Naive thymus-derived CD4-positive, alpha-beta T cell (primary cell): ENCODE measurements at regions of chr5 and their contacts with region 1.

Region 1: GRCh38 chr5:115169487-115170133 is at the start of gene TRIM36:
- DNase-seq: peak; percentile 70 to 97 (median 81)
- ATAC-seq: peak; percentile 98
- H3K4me3 ChIP-seq: peak within 1 kb of the TSS; percentile 70
- H3K4me3 Mint-ChIP-seq: peak within 1 kb of the TSS; percentile 71 to 89 (median 84)
- H3K27ac ChIP-seq: no peak within 1 kb of the TSS
- H3K27ac Mint-ChIP-seq: peak within 1 kb of the TSS in 2 of 9 donors; percentile 53 to 81
- H3K4me1 ChIP-seq: peaks cover 9 to 11% of the 10 kb centered on the region in 2 donors
- H3K4me1 Mint-ChIP-seq: peaks cover 6 to 17% (median 12%) of the 10 kb centered on the region in 7 donors
- H3K27me3 ChIP-seq: peaks cover 17 to 38% of the 10 kb centered on the region in 2 donors
- H3K27me3 Mint-ChIP-seq: peaks cover 61 to 77% (median 68%) of the 10 kb centered on the region in 5 donors
- total RNA-seq, gene TRIM36: 0.12 to 2.6 (median 0.32) TPM in 4 of 5 experiments, not detected in the other

Region 2: GRCh38 chr5:113302120-113302519 is 1867.5 kb before region 1 on chr5:
- CTCF ChIA-PET with region 1: no interaction called
- POLR2A ChIA-PET with region 1: no interaction called
- intact Hi-C with region 1: no loop called
- DNase-seq: no peak
- ATAC-seq: no peak
- H3K4me3 ChIP-seq: no peak overlapping the region
- H3K4me3 Mint-ChIP-seq: no peak overlapping the region
- H3K27ac ChIP-seq: no peak overlapping the region
- H3K27ac Mint-ChIP-seq: no peak overlapping the region
- H3K4me1 ChIP-seq: no peaks in the 10 kb centered on the region
- H3K4me1 Mint-ChIP-seq: no peaks in the 10 kb centered on the region
- H3K27me3 ChIP-seq: no peaks in the 10 kb centered on the region
- H3K27me3 Mint-ChIP-seq: peaks cover 28 to 54% (median 28%) of the 10 kb centered on the region in 5 donors

Region 3: GRCh38 chr5:115079924-115080623 is 89.5 kb before region 1 on chr5:
- CTCF ChIA-PET with region 1: no interaction called
- POLR2A ChIA-PET with region 1: no interaction called
- intact Hi-C with region 1: no loop called
- DNase-seq: no peak
- ATAC-seq: no peak
- H3K4me3 ChIP-seq: no peak overlapping the region
- H3K4me3 Mint-ChIP-seq: no peak overlapping the region
- H3K27ac ChIP-seq: no peak overlapping the region
- H3K27ac Mint-ChIP-seq: no peak overlapping the region
- H3K4me1 ChIP-seq: no peaks in the 10 kb centered on the region
- H3K4me1 Mint-ChIP-seq: no peaks in the 10 kb centered on the region
- H3K27me3 ChIP-seq: peaks cover 0 to 5% of the 10 kb centered on the region in 2 donors
- H3K27me3 Mint-ChIP-seq: peaks cover 9 to 25% (median 14%) of the 10 kb centered on the region in 5 donors

Region 4: DNA sequence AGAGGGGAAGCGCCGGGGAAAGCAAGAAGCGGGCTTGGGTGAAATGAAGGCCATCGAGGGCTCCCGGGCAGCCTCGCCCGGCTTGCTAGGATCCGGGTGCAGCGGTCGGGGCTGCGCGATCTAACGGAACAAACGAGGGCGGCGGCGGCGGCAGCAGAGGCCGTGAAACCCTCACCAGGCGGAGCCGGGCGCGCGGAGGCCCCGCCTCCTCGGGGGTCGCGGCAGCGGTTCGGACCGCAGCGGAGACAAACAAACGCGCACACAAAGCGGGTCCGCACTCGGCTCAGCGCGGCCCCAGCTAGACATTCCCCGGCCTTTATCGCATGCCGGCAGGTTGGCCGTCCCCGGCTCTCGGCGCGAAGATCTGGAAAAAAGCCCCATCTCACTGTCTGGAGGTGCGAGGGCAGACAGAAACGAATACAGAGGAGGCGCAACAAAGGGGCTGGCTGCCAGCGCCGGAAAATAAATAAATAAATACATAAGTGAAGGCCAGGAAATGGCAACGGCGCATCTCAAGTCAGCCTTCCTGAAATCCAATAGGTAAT is 10.6 kb after region 1 on chr5:
- CTCF ChIA-PET with region 1: no interaction called
- POLR2A ChIA-PET with region 1: no interaction called
- intact Hi-C with region 1: loop called in 1 of 2 experiments (anchors 1 kb)
- DNase-seq: peak in 5 of 9 donors; percentile 4 to 44 (median 22)
- ATAC-seq: peak; percentile 68
- H3K4me3 ChIP-seq: peak overlapping the region; percentile 42
- H3K4me3 Mint-ChIP-seq: peak overlapping the region; percentile 72 to 93 (median 83)
- H3K27ac ChIP-seq: no peak overlapping the region
- H3K27ac Mint-ChIP-seq: no peak overlapping the region
- H3K4me1 ChIP-seq: peaks cover 10 to 16% of the 10 kb centered on the region in 2 donors
- H3K4me1 Mint-ChIP-seq: peaks cover 5 to 20% (median 6%) of the 10 kb centered on the region in 7 donors
- H3K27me3 ChIP-seq: peaks cover 17 to 21% of the 10 kb centered on the region in 2 donors
- H3K27me3 Mint-ChIP-seq: peaks cover 81 to 89% (median 86%) of the 10 kb centered on the region in 5 donors

Region 5: DNA sequence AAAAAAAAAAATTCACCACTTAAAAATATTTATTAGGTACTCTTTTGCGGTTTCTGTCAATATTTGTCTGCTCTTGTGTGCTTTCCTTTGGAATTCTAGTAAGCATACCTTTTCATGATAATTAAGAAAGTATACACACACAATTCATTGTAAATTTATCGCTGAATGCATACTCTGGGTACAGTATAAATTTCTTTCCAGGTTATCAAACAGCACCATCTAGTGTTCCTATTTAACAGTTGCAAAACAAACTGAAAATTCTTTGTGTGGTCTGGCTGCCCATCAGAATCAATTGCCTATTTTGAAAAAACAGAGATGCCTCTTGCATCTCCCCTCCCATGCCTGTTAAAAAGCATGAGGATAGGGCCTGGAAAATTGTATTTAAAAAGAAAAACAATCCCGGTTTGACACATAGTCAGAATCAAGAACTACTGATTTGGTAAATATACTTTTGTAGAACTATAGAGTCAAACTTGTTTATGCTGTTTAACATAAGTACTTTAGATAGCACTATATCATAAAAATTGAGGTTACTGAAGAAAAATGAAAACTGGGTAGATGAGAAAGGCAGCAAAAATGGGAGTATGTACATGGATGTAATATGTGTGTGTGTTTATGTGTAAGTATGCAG is 76.9 kb after region 1 on chr5:
- CTCF ChIA-PET with region 1: no interaction called
- POLR2A ChIA-PET with region 1: no interaction called
- intact Hi-C with region 1: loop called in 1 of 2 experiments (anchors 2 kb)
- DNase-seq: peak in 6 of 9 donors; percentile 8 to 36 (median 18)
- ATAC-seq: peak; percentile 77
- H3K4me3 ChIP-seq: no peak overlapping the region
- H3K4me3 Mint-ChIP-seq: no peak overlapping the region
- H3K27ac ChIP-seq: no peak overlapping the region
- H3K27ac Mint-ChIP-seq: peak overlapping the region in 1 of 9 donors; percentile 1
- H3K4me1 ChIP-seq: no peaks in the 10 kb centered on the region
- H3K4me1 Mint-ChIP-seq: peaks cover 7 to 38% (median 20%) of the 10 kb centered on the region in 7 donors
- H3K27me3 ChIP-seq: no peaks in the 10 kb centered on the region
- H3K27me3 Mint-ChIP-seq: no peaks in the 10 kb centered on the region

Region 6: DNA sequence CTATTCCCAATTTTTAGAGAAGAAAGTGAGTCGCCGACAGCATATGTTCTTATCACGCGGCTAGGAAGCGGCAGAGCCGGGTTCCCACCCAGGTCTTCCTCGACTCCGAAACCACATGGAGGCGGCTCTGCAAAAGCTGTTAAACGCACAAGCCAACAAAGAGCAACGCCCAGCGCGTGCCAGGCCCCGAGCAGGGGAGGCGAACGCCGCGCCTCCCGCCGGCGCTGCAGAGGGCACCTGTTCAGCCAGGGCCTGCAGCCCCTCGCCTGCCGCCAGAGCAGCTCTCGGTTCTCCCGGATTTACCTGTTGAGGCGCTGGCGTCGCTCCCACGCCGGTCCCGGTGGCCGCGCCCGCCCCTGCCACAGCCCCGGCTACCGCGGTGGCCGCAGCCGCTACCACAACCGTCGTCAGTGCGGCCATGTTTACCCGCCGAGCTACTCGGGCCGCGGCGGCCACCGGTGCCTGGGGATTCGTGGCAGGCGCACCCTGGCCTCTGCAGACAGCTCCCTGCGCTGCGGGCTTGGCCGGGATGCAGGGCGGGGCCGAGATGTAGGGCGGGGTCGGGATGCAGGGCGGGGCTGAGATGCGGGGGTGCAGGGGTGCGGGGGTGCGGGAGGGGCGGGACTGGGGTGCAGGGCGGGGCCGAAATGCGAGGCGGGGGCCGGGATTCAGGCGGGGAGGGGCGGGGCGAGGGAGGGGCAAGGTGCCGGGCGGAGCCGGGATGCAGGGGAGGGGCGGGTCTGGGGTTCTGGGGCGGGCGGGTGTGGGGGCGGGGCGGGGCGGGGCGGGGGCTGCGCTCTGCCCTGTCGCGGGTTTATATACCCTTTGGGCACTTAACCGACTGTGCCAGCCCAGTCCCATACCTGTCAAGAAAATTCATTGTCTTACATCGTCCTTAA is 126.8 kb after region 1 on chr5 and contains the start of gene CCDC112:
- CTCF ChIA-PET with region 1: no interaction called
- POLR2A ChIA-PET with region 1: no interaction called
- intact Hi-C with region 1: loop called (anchors 1 to 2 kb)
- DNase-seq: peak; percentile 49 to 71 (median 67)
- ATAC-seq: peak; percentile 83
- H3K4me3 ChIP-seq: peak within 1 kb of the TSS; percentile 56
- H3K4me3 Mint-ChIP-seq: peak within 1 kb of the TSS; percentile 77 to 92 (median 89)
- H3K27ac ChIP-seq: peak within 1 kb of the TSS; percentile 47
- H3K27ac Mint-ChIP-seq: peak within 1 kb of the TSS in 8 of 9 donors; percentile 29 to 80 (median 69)
- H3K4me1 ChIP-seq: peaks cover 8 to 10% of the 10 kb centered on the region in 2 donors
- H3K4me1 Mint-ChIP-seq: peaks cover 5 to 18% (median 13%) of the 10 kb centered on the region in 7 donors
- H3K27me3 ChIP-seq: no peaks in the 10 kb centered on the region
- H3K27me3 Mint-ChIP-seq: peaks cover 0 to 69% (median 3%) of the 10 kb centered on the region in 5 donors
- total RNA-seq, gene CCDC112: 0.51 to 8.5 (median 3.9) TPM

Region 7: DNA sequence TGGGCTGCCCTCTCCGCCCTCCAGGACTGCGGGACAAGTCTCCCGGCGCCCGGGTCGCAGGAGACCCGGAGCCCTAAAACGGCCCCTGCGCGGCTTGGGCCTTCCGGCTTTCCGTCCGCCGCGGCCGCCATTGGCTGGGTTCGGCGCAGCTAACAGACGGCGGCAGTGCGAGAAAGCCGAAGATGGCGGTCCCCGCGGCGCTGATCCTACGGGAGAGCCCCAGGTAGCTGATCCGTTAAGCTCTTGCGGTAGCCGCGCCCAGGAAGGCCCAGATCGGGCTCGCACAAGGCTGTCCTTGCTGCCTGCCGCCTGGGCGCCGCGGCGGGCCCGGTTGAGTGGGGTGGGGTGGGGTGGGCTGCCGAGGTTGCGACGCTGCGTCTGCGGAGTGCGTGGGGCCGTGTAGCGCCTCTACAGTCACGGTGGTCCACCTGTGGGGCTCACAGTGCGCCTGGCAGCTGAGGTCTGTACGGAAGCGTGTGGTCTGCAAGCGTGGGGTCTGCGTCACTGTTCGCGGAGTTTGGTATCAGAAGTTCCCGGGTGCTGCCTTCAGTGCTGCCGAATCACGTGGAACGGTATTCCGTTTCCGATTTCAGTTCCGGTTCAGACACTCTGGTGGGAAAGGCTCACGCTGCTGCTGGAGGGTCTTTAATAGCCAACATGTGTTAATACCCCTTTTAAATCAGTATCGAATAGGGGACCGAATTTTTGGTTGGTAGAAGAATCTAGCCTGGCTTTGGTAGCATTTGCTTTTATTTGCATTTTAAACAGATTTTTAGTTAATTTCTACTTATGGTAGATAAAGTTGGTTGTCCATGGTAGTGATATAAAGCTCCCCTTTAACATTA is 915.5 kb after region 1 on chr5 and contains the start of gene COMMD10:
- CTCF ChIA-PET with region 1: no interaction called
- POLR2A ChIA-PET with region 1: no interaction called
- intact Hi-C with region 1: loop called (anchors 10 kb)
- DNase-seq: peak; percentile 65 to 88 (median 83)
- ATAC-seq: peak; percentile 95
- H3K4me3 ChIP-seq: peak within 1 kb of the TSS; percentile 54
- H3K4me3 Mint-ChIP-seq: peak within 1 kb of the TSS; percentile 87 to 98 (median 95)
- H3K27ac ChIP-seq: peak within 1 kb of the TSS; percentile 94
- H3K27ac Mint-ChIP-seq: peak within 1 kb of the TSS; percentile 90 to 99 (median 98)
- H3K4me1 ChIP-seq: peaks cover 13 to 16% of the 10 kb centered on the region in 2 donors
- H3K4me1 Mint-ChIP-seq: peaks cover 22 to 77% (median 66%) of the 10 kb centered on the region in 7 donors
- H3K27me3 ChIP-seq: no peaks in the 10 kb centered on the region
- H3K27me3 Mint-ChIP-seq: peaks cover 0 to 3% (median 0%) of the 10 kb centered on the region in 5 donors
- total RNA-seq, gene COMMD10: 29.4 to 50.6 (median 37.8) TPM